OCI-LY7 (cell line): ENCODE measurements at regions of chr1 and their contacts with region 1.

Region 1: GRCh38 chr1:26233903-26234643 is at the start of gene CEP85:
- DNase-seq: peak; percentile 98
- H3K4me3 ChIP-seq: peak within 1 kb of the TSS; percentile 86
- H3K27ac ChIP-seq: peak within 1 kb of the TSS; percentile 67
- H3K4me1 ChIP-seq: peaks cover 34% of the 10 kb centered on the region
- CTCF ChIP-seq: peak; percentile 87
- total RNA-seq, gene CEP85: 46.4 and 55.2 TPM in 2 replicates

Region 2: DNA sequence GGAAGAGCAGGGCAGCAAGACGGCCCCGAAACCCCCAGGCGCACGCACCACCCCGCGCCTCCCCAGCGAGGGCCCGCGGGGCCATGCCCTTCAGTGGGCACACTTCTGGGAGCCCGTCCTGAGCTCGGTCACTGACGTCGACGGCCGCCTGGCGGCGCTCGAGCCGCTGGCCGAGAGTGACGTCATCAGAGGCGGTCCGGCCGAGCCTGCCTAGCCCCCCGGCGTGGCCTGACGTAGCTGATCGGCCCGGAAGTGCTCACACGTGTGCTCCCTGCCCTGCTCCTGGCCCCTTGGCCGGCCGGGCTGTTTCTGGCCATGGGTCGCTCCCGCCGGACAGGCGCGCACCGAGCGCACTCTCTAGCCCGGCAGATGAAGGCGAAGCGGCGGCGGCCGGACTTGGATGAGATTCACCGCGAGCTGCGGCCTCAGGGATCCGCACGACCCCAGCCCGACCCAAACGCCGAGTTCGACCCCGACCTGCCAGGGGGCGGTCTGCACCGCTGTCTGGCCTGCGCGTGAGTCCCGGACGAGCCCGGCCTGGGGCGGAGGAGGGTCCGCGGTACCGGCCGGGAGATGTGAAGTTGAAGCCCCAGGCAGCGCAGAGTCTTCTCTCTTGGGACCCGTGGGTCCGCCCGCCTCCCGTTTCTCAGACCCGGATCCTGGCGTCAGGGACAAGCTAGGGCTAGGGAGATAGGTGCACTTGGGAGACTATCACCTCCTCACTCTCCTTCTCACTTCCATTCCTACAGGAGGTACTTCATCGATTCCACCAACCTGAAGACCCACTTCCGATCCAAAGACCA is 64.2 kb before region 1 on chr1 and contains the start of gene ZNF593:
- CTCF ChIA-PET with region 1: no interaction called
- POLR2A ChIA-PET with region 1: interaction called, 3 read pairs
- intact Hi-C with region 1: loop called (anchors 1 kb)
- DNase-seq: peak; percentile 96
- H3K4me3 ChIP-seq: peak within 1 kb of the TSS; percentile 81
- H3K27ac ChIP-seq: peak within 1 kb of the TSS; percentile 24
- H3K4me1 ChIP-seq: peaks cover 9% of the 10 kb centered on the region
- CTCF ChIP-seq: peak; percentile 84
- total RNA-seq, gene ZNF593: 60.0 and 63.6 TPM in 2 replicates